HepG2 (cell line): ENCODE measurements at regions of chr6 and their contacts with region 1.

Region 1: DNA sequence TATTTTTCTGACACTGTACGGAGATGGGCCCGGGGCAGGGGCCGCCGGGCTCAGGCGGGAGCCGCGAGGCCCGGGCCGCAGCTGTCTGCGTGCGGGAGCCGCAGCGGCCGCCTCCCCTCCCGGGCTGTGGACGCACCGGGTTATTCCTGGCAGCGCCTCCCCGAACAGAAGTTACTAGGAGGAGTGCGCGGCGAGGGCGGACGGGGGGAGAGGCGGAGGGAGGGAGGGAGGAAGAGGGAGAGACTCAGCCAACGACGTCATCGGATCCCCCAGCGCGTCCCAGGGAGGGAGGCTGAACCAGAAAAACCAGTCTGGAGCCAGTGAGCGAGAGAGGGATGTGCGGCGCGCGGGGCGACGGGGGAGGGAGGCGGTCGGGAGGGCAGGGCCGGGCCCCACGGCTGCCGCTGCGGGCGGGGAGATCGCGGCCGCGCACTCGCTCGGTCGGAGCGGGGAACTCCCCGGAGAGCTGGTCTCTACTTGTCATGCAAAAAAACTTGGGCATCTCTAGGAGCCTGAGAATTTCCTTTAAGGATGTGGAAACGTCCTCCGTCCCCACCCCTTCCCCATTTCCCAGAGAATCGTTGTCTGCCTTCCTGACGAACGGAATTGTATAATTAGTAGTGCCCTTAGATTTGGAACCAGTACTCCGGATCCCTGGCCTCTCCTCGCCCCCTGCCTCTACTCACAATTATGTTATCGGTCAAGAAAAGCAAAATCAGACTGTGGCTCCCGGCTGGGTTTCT is 1.4 kb upstream of the HIVEP2 start:
- DNase-seq: peak; percentile 87
- ATAC-seq: peak; percentile 69
- H3K4me3 ChIP-seq: peak overlapping the region; percentile 66 to 99 (median 78)
- H3K27ac ChIP-seq: peak overlapping the region; percentile 97
- H3K4me1 ChIP-seq: peaks cover 35% of the 10 kb centered on the region
- H3K27me3 ChIP-seq: peaks cover 0 to 10% of the 10 kb centered on the region in 2 experiments; a peak in 3 of 5 replicates
- CTCF ChIP-seq: peak; percentile 17
- EP300 ChIP-seq: 0 out of 4 replicates have a peak, but pooled peaks of 1 of the 2 experiments have one; percentile 8
- POLR2A ChIP-seq: peak; percentile 63 to 72
- RAD21 ChIP-seq: 0 out of 2 replicates have a peak, but pooled peaks have one; percentile 1

Region 2: DNA sequence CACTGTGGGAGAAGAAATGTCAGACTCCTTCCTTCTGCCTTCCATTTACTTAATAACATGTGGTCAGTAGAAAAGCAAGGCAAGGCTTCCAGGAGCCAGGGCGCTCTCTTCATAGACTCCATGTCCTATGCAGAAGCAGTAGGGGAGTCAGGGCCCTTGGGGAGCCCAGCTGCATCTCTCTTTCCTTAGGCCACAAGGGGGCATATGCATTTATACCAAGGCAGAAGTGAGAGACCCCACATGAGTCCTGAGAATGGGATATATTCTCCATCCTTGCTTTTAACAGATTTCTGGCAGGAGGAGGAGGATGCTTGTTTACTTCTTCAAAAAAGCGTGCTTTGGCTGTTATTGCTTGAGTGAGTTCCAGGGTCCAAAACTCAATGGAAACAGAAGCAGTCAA is 199.8 kb before region 1 on chr6:
- CTCF ChIA-PET with region 1: interaction called, 3 read pairs
- POLR2A ChIA-PET with region 1: no interaction called
- in situ Hi-C with region 1: no loop called
- intact Hi-C with region 1: loop called (anchors 5 kb)
- DNase-seq: peak; percentile 56
- ATAC-seq: peak; percentile 96
- H3K4me3 ChIP-seq: no peak overlapping the region
- H3K27ac ChIP-seq: no peak overlapping the region
- H3K4me1 ChIP-seq: no peaks in the 10 kb centered on the region
- H3K27me3 ChIP-seq: peaks cover 0 to 10% of the 10 kb centered on the region in 2 experiments; a peak in 1 of 5 replicates
- CTCF ChIP-seq: peak; percentile 71
- EP300 ChIP-seq: no peak
- POLR2A ChIP-seq: no peak
- RAD21 ChIP-seq: peak; percentile 74; the same call in 1 of the 2 replicates

Region 3: GRCh38 chr6:142871910-142872331 is 74.4 kb before region 1 on chr6:
- CTCF ChIA-PET with region 1: no interaction called
- POLR2A ChIA-PET with region 1: no interaction called
- in situ Hi-C with region 1: no loop called
- intact Hi-C with region 1: loop called (anchors 1 kb)
- DNase-seq: peak; percentile 83
- ATAC-seq: peak; percentile 49
- H3K4me3 ChIP-seq: no peak overlapping the region
- H3K27ac ChIP-seq: no peak overlapping the region
- H3K4me1 ChIP-seq: peaks cover 68% of the 10 kb centered on the region
- H3K27me3 ChIP-seq: no peaks in the 10 kb centered on the region
- CTCF ChIP-seq: no peak
- EP300 ChIP-seq: peak in 1 of 2 experiments; percentile 49; a peak in 1 of 4 replicates
- POLR2A ChIP-seq: no peak
- RAD21 ChIP-seq: no peak

Region 4: DNA sequence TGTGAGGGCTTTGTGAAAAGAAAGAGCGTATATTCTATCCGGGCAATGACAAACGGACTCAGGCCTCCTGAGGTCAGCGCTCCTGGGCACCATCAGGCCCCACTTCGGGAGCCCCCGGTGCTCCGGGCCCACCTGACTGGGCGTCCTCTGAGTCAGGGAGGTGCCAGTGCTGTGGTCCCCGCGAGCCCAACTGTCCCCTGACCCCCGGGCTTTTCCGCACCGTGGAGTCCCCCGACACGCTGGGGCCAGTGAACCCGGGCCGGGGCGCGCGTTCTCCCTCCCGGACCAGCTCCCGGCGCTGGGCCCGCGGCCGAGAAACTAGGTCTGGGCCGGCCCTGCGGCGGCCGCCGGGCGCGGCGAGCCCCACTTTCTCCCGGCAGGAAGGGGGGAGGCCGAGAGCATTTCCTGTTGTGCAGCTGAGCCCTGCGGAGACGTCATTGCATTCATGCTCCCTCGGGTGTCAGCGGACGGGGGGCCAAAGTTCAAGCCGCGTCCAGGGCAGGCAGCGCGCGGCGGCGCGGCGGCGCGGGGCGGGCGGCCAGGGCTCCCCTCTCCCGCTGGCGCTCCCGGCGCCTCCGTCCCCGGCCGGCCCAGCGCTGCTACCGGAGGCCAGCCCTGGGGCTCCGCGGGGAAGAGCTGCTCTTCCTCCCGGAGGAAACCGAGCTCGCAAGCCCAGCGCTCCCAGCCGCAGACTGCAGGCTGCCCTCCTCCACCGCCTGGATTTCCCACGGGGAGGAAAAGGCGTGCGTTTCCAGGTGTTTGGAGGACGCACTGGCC is 19.7 kb before region 1 on chr6:
- CTCF ChIA-PET with region 1: no interaction called
- POLR2A ChIA-PET with region 1: interaction called, 28 read pairs
- in situ Hi-C with region 1: no loop called
- intact Hi-C with region 1: loop called (anchors 1 kb)
- DNase-seq: peak; percentile 93
- ATAC-seq: peak; percentile 97
- H3K4me3 ChIP-seq: peak overlapping the region; percentile 84 to 99 (median 93)
- H3K27ac ChIP-seq: peak overlapping the region; percentile 99
- H3K4me1 ChIP-seq: peaks cover 38% of the 10 kb centered on the region
- H3K27me3 ChIP-seq: no peaks in the 10 kb centered on the region; a peak in 1 of 5 replicates
- CTCF ChIP-seq: no peak
- EP300 ChIP-seq: peak; percentile 57 to 85; a peak in 3 of 4 replicates
- POLR2A ChIP-seq: peak; percentile 84 to 93; a peak in 3 of 4 replicates
- RAD21 ChIP-seq: peak; percentile 83

Region 5: GRCh38 chr6:143060354-143060805 is 114.0 kb after region 1 on chr6:
- CTCF ChIA-PET with region 1: no interaction called
- POLR2A ChIA-PET with region 1: interaction called, 14 read pairs
- in situ Hi-C with region 1: loop called (anchors 5 kb)
- intact Hi-C with region 1: loop called (anchors 1 kb)
- DNase-seq: peak; percentile 88
- ATAC-seq: peak; percentile 76
- H3K4me3 ChIP-seq: peak overlapping the region; percentile 68 to 87 (median 85)
- H3K27ac ChIP-seq: peak overlapping the region; percentile 88
- H3K4me1 ChIP-seq: peaks cover 56% of the 10 kb centered on the region
- H3K27me3 ChIP-seq: no peaks in the 10 kb centered on the region; a peak in 1 of 5 replicates
- CTCF ChIP-seq: peak; percentile 78
- EP300 ChIP-seq: 0 out of 4 replicates have a peak, but pooled peaks of 1 of the 2 experiments have one; percentile 33
- POLR2A ChIP-seq: peak; percentile 59 to 69; a peak in 2 of 4 replicates
- RAD21 ChIP-seq: peak; percentile 86

Region 6: GRCh38 chr6:143176090-143177021 is 230.0 kb after region 1 on chr6:
- CTCF ChIA-PET with region 1: no interaction called
- POLR2A ChIA-PET with region 1: no interaction called
- in situ Hi-C with region 1: no loop called
- intact Hi-C with region 1: no loop called
- DNase-seq: no peak
- ATAC-seq: no peak
- H3K4me3 ChIP-seq: no peak overlapping the region
- H3K27ac ChIP-seq: no peak overlapping the region
- H3K4me1 ChIP-seq: no peaks in the 10 kb centered on the region
- H3K27me3 ChIP-seq: no peaks in the 10 kb centered on the region
- CTCF ChIP-seq: peak; percentile 41
- EP300 ChIP-seq: no peak
- POLR2A ChIP-seq: no peak
- RAD21 ChIP-seq: no peak

Region 7: GRCh38 chr6:143410859-143411270 is 464.5 kb after region 1 on chr6:
- CTCF ChIA-PET with region 1: no interaction called
- POLR2A ChIA-PET with region 1: no interaction called
- in situ Hi-C with region 1: loop called (anchors 10 kb)
- intact Hi-C with region 1: no loop called
- DNase-seq: peak; percentile 95
- ATAC-seq: peak; percentile 75
- H3K4me3 ChIP-seq: no peak overlapping the region; a peak in 1 of 6 replicates
- H3K27ac ChIP-seq: peak overlapping the region; percentile 53
- H3K4me1 ChIP-seq: peaks cover 64% of the 10 kb centered on the region
- H3K27me3 ChIP-seq: no peaks in the 10 kb centered on the region
- CTCF ChIP-seq: no peak
- EP300 ChIP-seq: peak in 1 of 2 experiments; percentile 97; a peak in 2 of 4 replicates
- POLR2A ChIP-seq: no peak
- RAD21 ChIP-seq: no peak